H1 (cell line): ENCODE measurements at regions of chr20 and their contacts with region 1.

Region 1: GRCh38 chr20:63698739-63699465 is 2.5 kb downstream of the TNFRSF6B start:
- DNase-seq: no peak
- H3K4me3 ChIP-seq: no peak overlapping the region
- H3K27ac ChIP-seq: no peak overlapping the region
- H3K4me1 ChIP-seq: peaks cover 0 to 12% (median 7%) of the 10 kb centered on the region in 4 experiments; a peak in 4 of 7 replicates
- H3K27me3 ChIP-seq: no peaks in the 10 kb centered on the region
- CTCF ChIP-seq: no peak
- EP300 ChIP-seq: no peak
- POLR2A ChIP-seq: peak; percentile 16 to 19; a peak in 2 of 3 replicates
- RAD21 ChIP-seq: no peak

Region 2: GRCh38 chr20:63657937-63658748 is 40.8 kb before region 1 on chr20 and contains the start of gene RTEL1:
- CTCF ChIA-PET with region 1: no interaction called
- POLR2A ChIA-PET with region 1: interaction called, 10 read pairs
- DNase-seq: peak in 1 of 2 experiments; percentile 96
- H3K4me3 ChIP-seq: peak within 1 kb of the TSS; percentile 75 to 96 (median 84)
- H3K27ac ChIP-seq: no peak within 1 kb of the TSS; the same call in 1 of the 2 replicates
- H3K4me1 ChIP-seq: peaks cover 0 to 16% (median 14%) of the 10 kb centered on the region in 4 experiments; a peak in 6 of 7 replicates
- H3K27me3 ChIP-seq: no peaks in the 10 kb centered on the region
- CTCF ChIP-seq: peak in 1 of 3 experiments; percentile 12; a peak in 1 of 4 replicates
- EP300 ChIP-seq: no peak
- POLR2A ChIP-seq: peak in 1 of 2 experiments; percentile 47; a peak in 2 of 3 replicates
- RAD21 ChIP-seq: no peak
- total RNA-seq, gene RTEL1: 37.1 and 37.8 TPM in 2 replicates

Region 3: GRCh38 chr20:63686492-63687321 is 12.2 kb before region 1 on chr20:
- CTCF ChIA-PET with region 1: interaction called, 4 read pairs
- POLR2A ChIA-PET with region 1: interaction called, 31 read pairs
- DNase-seq: no peak
- H3K4me3 ChIP-seq: no peak overlapping the region
- H3K27ac ChIP-seq: no peak overlapping the region
- H3K4me1 ChIP-seq: no peaks in the 10 kb centered on the region; a peak in 1 of 7 replicates
- H3K27me3 ChIP-seq: no peaks in the 10 kb centered on the region
- CTCF ChIP-seq: no peak
- EP300 ChIP-seq: no peak
- POLR2A ChIP-seq: no peak
- RAD21 ChIP-seq: no peak

Region 4: DNA sequence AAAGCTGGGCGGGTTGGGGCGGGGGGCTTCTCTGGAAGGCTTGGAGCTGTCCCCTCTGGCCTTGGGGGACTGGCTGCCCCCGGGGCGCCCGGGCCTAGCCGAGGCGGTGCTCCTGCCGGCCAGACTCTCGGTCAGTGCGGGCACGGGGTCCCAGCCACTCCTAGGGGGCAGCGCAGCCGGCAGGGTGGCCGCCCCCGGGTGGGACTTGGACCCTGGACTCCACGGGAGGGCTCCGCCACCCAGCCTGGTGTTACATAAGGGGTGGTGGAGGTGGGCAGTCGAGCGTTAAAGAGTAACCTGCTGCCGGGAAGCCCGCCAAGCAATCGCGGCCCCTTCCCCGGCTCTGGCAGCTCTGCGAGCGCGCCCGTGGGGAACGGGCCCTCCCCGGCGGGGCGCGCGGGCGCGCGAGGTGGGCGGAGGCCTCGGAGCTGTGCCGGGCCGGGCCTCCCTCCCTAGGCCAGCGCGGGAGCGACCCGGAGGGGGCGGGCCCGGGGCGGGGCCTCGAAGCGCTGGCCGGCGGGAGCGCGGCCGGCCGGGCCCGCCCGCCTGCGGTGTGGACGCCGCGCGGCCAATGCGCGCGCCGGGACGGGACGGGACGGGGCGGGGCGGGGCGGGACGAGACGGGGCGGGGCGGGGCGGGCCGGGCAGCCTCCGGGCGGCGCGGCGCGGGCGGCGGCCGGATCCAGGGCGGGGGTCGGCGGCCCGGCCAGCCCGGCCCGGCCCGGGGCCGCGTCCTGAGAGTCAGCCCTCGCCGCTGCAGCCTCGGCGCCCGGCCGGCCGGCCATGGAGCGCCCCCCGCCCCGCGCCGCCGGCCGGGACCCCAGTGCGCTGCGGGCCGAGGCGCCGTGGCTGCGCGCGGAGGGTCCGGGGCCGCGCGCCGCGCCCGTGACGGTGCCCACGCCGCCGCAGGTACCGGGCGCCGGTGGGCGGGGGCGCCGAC is 40.5 kb after region 1 on chr20 and contains the start of gene SLC2A4RG:
- CTCF ChIA-PET with region 1: interaction called, 3 read pairs
- POLR2A ChIA-PET with region 1: interaction called, 15 read pairs
- DNase-seq: peak in 1 of 2 experiments; percentile 79
- H3K4me3 ChIP-seq: peak within 1 kb of the TSS; percentile 49 to 83 (median 60)
- H3K27ac ChIP-seq: no peak within 1 kb of the TSS
- H3K4me1 ChIP-seq: peaks cover 0 to 20% (median 11%) of the 10 kb centered on the region in 4 experiments; a peak in 6 of 7 replicates
- H3K27me3 ChIP-seq: peaks cover 0 to 12% (median 8%) of the 10 kb centered on the region in 4 experiments; a peak in 4 of 7 replicates
- CTCF ChIP-seq: no peak
- EP300 ChIP-seq: no peak
- POLR2A ChIP-seq: no peak
- RAD21 ChIP-seq: no peak
- total RNA-seq, gene SLC2A4RG: 25.0 and 29.1 TPM in 2 replicates